MCF 10A (cell line): ENCODE measurements at regions of chrX and their contacts with region 1.

Region 1: GRCh38 chrX:123833387-123833786 is 26.5 kb upstream of the XIAP start:
- DNase-seq: peak; percentile 75
- H3K4me3 Mint-ChIP-seq: no peak overlapping the region
- H3K27ac Mint-ChIP-seq: no peak overlapping the region
- H3K4me1 Mint-ChIP-seq: peaks cover 6% of the 10 kb centered on the region
- H3K27me3 Mint-ChIP-seq: peaks cover 11% of the 10 kb centered on the region
- CTCF ChIP-seq: peak; percentile 65

Region 2: GRCh38 chrX:123704781-123705180 is 128.6 kb before region 1 on chrX:
- CTCF ChIA-PET with region 1: no interaction called
- POLR2A ChIA-PET with region 1: no interaction called
- intact Hi-C with region 1: no loop called
- DNase-seq: no peak
- H3K4me3 Mint-ChIP-seq: no peak overlapping the region
- H3K27ac Mint-ChIP-seq: no peak overlapping the region
- H3K4me1 Mint-ChIP-seq: no peaks in the 10 kb centered on the region
- H3K27me3 Mint-ChIP-seq: no peaks in the 10 kb centered on the region
- CTCF ChIP-seq: no peak

Region 3: DNA sequence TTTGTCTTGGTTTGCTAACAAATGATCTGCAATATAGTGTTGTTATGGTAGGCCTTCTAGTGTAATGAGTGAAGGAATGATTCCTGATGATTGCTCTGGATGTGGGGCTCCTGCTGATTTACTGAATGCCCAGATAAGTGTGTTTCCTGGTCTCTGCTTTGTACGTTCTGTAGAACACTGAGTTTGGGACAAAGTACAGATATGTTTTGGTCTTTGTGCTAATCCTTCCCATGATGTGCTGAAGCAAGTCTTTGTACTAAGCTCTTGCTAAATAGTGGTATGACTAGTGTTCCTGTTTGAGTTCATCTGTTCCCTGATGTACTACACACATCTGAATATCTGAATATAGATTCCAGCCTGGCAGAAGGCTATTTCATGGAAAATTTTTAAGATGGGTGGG is 10.4 kb before region 1 on chrX:
- CTCF ChIA-PET with region 1: interaction called, 12 read pairs
- POLR2A ChIA-PET with region 1: no interaction called
- intact Hi-C with region 1: no loop called
- DNase-seq: no peak
- H3K4me3 Mint-ChIP-seq: no peak overlapping the region
- H3K27ac Mint-ChIP-seq: no peak overlapping the region
- H3K4me1 Mint-ChIP-seq: peaks cover 6% of the 10 kb centered on the region
- H3K27me3 Mint-ChIP-seq: no peaks in the 10 kb centered on the region
- CTCF ChIP-seq: no peak

Region 4: DNA sequence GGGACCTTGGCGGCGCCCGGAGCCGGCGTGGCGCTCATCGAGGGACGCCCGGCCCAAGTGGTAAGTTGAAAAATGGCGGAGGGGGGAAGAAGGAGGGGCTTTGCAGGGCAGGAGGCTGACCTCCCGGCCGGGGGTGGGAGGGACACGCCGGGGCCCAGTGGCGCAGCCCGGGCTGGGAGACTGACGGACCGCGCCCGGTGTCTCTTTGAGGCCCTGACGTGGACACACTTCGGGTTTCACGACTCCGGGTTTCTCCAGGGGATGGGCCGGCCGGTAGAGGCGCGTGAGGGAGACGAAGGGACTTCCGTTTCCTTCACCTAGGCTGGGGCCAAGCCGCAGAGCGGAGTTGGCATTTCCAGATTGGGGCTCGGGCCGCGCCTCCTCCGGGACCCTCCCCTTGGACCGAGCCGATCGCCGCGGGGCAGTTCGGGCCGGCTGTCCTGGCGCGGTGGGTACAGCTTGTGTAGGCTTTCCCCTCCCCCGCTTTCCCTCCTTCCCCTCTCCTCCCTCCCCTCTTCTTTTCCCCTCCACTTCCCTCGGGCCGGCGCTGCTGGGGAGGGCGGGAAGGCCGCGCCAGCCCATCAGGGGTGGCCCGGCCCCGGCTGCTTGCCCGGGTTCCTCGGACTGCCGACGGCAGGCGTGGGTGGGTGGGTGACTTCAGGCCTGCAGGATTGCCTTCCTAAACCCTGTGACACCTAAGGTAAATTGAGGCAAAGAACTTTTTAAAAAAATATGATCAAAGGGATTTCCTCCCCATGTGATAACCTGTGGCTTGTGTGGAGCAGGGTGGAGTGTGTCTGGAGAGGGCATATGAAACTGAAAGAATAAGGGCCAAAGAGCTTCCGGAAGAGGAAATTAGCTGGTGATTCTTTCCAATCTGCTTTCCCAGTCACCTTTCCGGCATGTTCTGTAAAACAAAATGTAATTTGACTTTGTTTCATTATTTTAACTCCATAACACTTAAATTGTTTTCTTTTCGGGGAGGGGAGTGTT is 26.8 kb after region 1 on chrX and contains the start of gene XIAP:
- CTCF ChIA-PET with region 1: interaction called, 10 read pairs
- POLR2A ChIA-PET with region 1: interaction called, 40 read pairs
- intact Hi-C with region 1: no loop called
- DNase-seq: peak; percentile 89
- H3K4me3 Mint-ChIP-seq: peak within 1 kb of the TSS; percentile 73
- H3K27ac Mint-ChIP-seq: peak within 1 kb of the TSS; percentile 73
- H3K4me1 Mint-ChIP-seq: no peaks in the 10 kb centered on the region
- H3K27me3 Mint-ChIP-seq: no peaks in the 10 kb centered on the region
- CTCF ChIP-seq: no peak
- total RNA-seq, gene XIAP: 62.1 and 62.9 TPM in 2 replicates

Region 5: GRCh38 chrX:123884809-123885408 is 51.5 kb after region 1 on chrX:
- CTCF ChIA-PET with region 1: interaction called, 36 read pairs
- POLR2A ChIA-PET with region 1: interaction called, 4 read pairs
- intact Hi-C with region 1: loop called (anchors 1 kb)
- DNase-seq: peak; percentile 45
- H3K4me3 Mint-ChIP-seq: no peak overlapping the region
- H3K27ac Mint-ChIP-seq: no peak overlapping the region
- H3K4me1 Mint-ChIP-seq: no peaks in the 10 kb centered on the region
- H3K27me3 Mint-ChIP-seq: no peaks in the 10 kb centered on the region
- CTCF ChIP-seq: peak; percentile 34

Region 6: DNA sequence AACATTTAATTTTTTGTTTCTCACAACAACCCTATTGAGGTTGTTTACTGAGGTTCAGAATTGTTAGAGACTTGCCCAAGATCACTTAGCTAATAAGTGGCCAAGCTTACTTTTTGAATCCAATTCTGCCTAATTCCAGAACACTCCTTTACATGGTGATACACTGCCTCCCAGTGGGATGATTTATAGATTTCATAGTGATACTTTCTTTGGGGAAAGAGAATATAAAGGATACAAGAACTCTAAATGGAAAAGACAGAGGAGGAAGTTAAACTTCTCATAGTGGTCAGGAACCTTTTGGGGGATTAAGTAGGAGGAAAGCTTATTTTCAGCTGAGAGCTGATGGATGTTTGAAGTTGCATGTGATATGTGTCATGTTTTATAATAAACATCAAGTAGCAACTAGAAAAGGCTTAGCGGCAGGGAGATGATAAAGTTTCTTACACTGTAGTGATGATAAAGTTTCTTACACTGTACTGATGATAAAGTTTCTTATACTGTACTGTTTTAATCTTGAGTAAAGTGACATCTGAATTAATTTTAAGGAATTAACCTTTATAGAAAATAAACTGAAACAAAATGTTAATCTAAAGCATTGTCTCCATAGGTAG is 143.4 kb after region 1 on chrX:
- CTCF ChIA-PET with region 1: interaction called, 83 read pairs
- POLR2A ChIA-PET with region 1: interaction called, 4 read pairs
- intact Hi-C with region 1: loop called (anchors 1 kb)
- DNase-seq: peak; percentile 60
- H3K4me3 Mint-ChIP-seq: no peak overlapping the region
- H3K27ac Mint-ChIP-seq: no peak overlapping the region
- H3K4me1 Mint-ChIP-seq: peaks cover 12% of the 10 kb centered on the region
- H3K27me3 Mint-ChIP-seq: no peaks in the 10 kb centered on the region
- CTCF ChIP-seq: peak; percentile 35